ENCODE measurements at regions of chr5 and their contacts with region 1.

Region 1: GRCh38 chr5:38382898-38383297 is 124.5 kb downstream of the EGFLAM start:
- DNase-seq: peak in 7 of 9 donors; percentile 18 to 56 (median 35)
- ATAC-seq: peak; percentile 83
- H3K4me3 ChIP-seq: no peak overlapping the region
- H3K4me3 Mint-ChIP-seq: no peak overlapping the region
- H3K27ac ChIP-seq: no peak overlapping the region
- H3K27ac Mint-ChIP-seq: no peak overlapping the region
- H3K4me1 ChIP-seq: no peaks in the 10 kb centered on the region
- H3K4me1 Mint-ChIP-seq: peaks cover 3 to 23% (median 18%) of the 10 kb centered on the region in 7 donors
- H3K27me3 ChIP-seq: no peaks in the 10 kb centered on the region
- H3K27me3 Mint-ChIP-seq: peaks cover 19 to 40% (median 28%) of the 10 kb centered on the region in 5 donors

Region 2: DNA sequence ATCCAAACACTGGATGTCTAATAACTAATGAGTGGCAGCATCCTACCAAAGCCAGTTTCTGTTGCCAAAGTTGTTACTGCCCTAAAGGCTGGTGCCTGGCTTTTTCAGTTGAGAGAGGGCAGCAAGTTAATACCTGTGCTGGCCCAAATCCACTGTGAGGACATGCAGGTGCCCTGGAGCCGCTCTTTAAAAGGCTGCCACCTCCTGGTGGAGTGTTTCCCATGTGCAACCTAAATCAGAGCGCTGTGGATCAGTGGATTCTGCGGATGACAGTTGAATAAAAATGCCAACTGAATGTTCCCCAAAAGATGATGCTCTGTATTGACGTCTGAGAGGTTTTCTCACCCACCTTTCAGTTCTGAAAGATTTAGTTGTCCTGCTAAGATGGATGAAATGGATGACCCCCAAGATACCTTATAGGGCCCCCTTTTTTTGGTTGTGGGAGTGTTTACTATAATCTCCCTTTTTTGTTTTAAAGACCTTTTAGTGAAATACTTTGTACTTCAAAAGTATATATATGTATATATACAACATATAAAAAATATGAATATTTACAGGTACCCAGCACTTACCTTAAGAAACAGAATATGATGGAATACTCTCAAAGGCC is 21.9 kb after region 1 on chr5:
- CTCF ChIA-PET with region 1: interaction called, 3 read pairs
- POLR2A ChIA-PET with region 1: no interaction called
- intact Hi-C with region 1: loop called in 1 of 2 experiments (anchors 1 kb)
- DNase-seq: peak in 4 of 9 donors; percentile 5 to 22 (median 8)
- ATAC-seq: no peak
- H3K4me3 ChIP-seq: no peak overlapping the region
- H3K4me3 Mint-ChIP-seq: no peak overlapping the region
- H3K27ac ChIP-seq: no peak overlapping the region
- H3K27ac Mint-ChIP-seq: no peak overlapping the region
- H3K4me1 ChIP-seq: no peaks in the 10 kb centered on the region
- H3K4me1 Mint-ChIP-seq: peaks cover 0 to 1% (median 0%) of the 10 kb centered on the region in 7 donors
- H3K27me3 ChIP-seq: no peaks in the 10 kb centered on the region
- H3K27me3 Mint-ChIP-seq: peaks cover 26 to 40% (median 29%) of the 10 kb centered on the region in 5 donors

Region 3: GRCh38 chr5:38420691-38421390 is 37.9 kb after region 1 on chr5:
- CTCF ChIA-PET with region 1: interaction called, 3 read pairs
- POLR2A ChIA-PET with region 1: no interaction called
- intact Hi-C with region 1: loop called in 1 of 2 experiments (anchors 2 kb)
- DNase-seq: peak in 3 of 9 donors; percentile 4 to 18 (median 11)
- ATAC-seq: peak; percentile 42
- H3K4me3 ChIP-seq: no peak overlapping the region
- H3K4me3 Mint-ChIP-seq: no peak overlapping the region
- H3K27ac ChIP-seq: no peak overlapping the region
- H3K27ac Mint-ChIP-seq: no peak overlapping the region
- H3K4me1 ChIP-seq: no peaks in the 10 kb centered on the region
- H3K4me1 Mint-ChIP-seq: peaks cover 0 to 1% (median 0%) of the 10 kb centered on the region in 7 donors
- H3K27me3 ChIP-seq: no peaks in the 10 kb centered on the region
- H3K27me3 Mint-ChIP-seq: peaks cover 24 to 42% (median 36%) of the 10 kb centered on the region in 5 donors

Region 4: DNA sequence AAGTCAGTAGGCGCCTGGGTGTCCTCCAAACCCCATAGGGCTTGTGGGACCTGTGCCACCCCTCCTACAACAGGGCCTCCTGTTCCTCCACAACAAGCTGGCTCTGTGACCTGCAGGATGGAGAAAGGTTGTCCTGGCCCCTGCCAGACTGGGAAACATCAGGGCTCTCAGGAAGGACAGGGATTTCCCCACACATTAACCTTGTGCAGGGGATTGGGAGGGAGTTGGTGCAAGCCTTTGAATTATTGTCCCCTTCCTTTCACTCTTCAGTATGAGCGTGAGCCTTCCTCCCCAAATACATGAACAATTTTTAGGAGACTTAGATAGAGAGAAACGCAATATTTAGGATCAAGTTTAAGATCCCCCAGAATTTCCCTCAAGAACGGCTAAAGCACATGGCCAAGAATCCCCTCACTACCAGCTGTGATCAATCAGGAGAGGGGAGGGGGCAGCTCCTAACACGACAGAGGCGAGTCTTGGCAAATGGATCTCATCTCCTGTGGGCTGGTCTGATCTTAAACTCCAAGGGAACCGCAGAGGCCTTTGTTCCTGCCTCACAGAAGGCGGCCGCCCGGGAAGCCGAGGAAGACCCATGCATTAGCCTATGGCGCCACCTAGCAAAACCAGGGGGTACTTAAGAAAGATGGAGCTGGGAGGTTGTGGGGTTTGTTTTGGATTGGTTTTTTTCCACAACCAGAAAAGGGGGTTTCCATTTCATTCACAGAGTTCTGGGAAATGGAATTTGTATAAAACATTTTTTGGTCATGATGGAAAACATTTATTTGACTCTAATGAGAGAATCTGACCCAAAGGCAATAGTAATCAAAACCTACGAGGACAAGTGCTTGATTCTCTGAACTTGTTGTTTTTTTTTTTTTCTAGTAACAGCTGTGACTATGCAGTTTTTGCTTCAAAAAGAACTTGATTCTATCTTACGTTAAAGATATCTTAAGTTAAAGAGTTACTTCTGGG is 426.8 kb after region 1 on chr5:
- CTCF ChIA-PET with region 1: no interaction called
- POLR2A ChIA-PET with region 1: no interaction called
- intact Hi-C with region 1: loop called (anchors 1 to 5 kb)
- DNase-seq: peak in 7 of 9 donors; percentile 8 to 52 (median 22)
- ATAC-seq: no peak
- H3K4me3 ChIP-seq: no peak overlapping the region
- H3K4me3 Mint-ChIP-seq: peak overlapping the region in 1 of 10 donors; percentile 7
- H3K27ac ChIP-seq: no peak overlapping the region
- H3K27ac Mint-ChIP-seq: no peak overlapping the region
- H3K4me1 ChIP-seq: no peaks in the 10 kb centered on the region
- H3K4me1 Mint-ChIP-seq: peaks cover 0 to 9% (median 0%) of the 10 kb centered on the region in 7 donors
- H3K27me3 ChIP-seq: no peaks in the 10 kb centered on the region
- H3K27me3 Mint-ChIP-seq: peaks cover 21 to 62% (median 49%) of the 10 kb centered on the region in 5 donors

Region 5: DNA sequence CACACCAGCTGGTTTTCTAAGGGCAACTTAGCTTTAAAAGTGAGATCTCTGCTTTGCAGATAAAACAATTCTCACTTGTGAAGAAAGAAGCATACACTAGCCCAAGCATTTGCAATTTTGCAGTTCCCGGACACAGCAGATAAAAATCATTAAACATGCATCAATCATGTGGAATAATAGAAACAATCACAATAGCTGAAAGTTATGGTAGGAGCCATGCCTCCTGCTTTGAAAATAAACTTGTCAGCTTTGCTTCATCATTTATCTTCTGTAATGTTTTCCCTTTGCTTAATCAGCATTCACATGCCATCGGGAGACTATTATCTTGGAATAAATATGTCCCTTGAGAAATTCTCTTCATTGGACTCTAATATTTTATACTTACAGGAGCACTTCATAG is 1102.2 kb after region 1 on chr5:
- CTCF ChIA-PET with region 1: no interaction called
- POLR2A ChIA-PET with region 1: no interaction called
- intact Hi-C with region 1: no loop called
- DNase-seq: no peak
- ATAC-seq: no peak
- H3K4me3 ChIP-seq: no peak overlapping the region
- H3K4me3 Mint-ChIP-seq: no peak overlapping the region
- H3K27ac ChIP-seq: no peak overlapping the region
- H3K27ac Mint-ChIP-seq: no peak overlapping the region
- H3K4me1 ChIP-seq: no peaks in the 10 kb centered on the region
- H3K4me1 Mint-ChIP-seq: no peaks in the 10 kb centered on the region
- H3K27me3 ChIP-seq: no peaks in the 10 kb centered on the region
- H3K27me3 Mint-ChIP-seq: peaks cover 5 to 25% (median 9%) of the 10 kb centered on the region in 5 donors

Region 6: DNA sequence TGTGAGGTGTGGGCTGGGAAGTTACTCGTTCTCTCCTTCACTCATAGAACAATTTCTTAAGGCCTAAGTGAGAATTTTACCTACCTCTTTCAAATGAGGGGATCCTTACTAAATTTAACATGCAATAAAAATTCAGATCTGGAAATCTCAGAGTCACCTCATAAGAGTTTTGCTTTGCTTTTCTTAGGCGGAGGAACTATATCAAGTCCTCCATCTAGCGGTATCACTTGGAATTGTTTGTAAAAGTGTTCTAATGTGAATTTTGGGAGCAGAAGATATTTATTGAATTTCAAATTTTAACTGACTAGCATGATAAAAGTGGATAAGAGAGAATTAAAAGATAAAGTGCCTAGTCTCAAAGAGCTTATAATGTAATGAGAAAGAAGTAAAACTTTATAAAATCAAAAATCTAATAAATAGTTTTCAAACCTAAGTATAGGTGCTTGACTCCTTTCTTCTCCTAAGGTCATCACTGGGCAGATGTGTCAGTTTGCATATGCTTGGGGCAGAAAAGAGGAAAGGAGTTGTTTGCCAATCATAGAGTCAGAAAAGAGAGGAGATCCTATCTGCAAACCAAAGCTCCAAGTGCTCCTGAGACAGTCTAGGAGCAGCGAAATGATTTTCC is 1187.6 kb after region 1 on chr5:
- CTCF ChIA-PET with region 1: no interaction called
- POLR2A ChIA-PET with region 1: no interaction called
- intact Hi-C with region 1: loop called in 1 of 2 experiments (anchors 2 kb)
- DNase-seq: peak in 5 of 9 donors; percentile 8 to 31 (median 27)
- ATAC-seq: peak; percentile 36
- H3K4me3 ChIP-seq: no peak overlapping the region
- H3K4me3 Mint-ChIP-seq: no peak overlapping the region
- H3K27ac ChIP-seq: no peak overlapping the region
- H3K27ac Mint-ChIP-seq: no peak overlapping the region
- H3K4me1 ChIP-seq: no peaks in the 10 kb centered on the region
- H3K4me1 Mint-ChIP-seq: peaks cover 0 to 3% (median 0%) of the 10 kb centered on the region in 7 donors
- H3K27me3 ChIP-seq: no peaks in the 10 kb centered on the region
- H3K27me3 Mint-ChIP-seq: peaks cover 0 to 29% (median 10%) of the 10 kb centered on the region in 5 donors